Activated naive CD4-positive, alpha-beta T cell treated with anti-CD3 and anti-CD28 coated beads, Interleukin-2, amount 10 ng/mL, durations not matched to agents 7 days and 5 days (primary cell): ENCODE measurements at regions of chrX and their contacts with region 1.

Region 1: DNA sequence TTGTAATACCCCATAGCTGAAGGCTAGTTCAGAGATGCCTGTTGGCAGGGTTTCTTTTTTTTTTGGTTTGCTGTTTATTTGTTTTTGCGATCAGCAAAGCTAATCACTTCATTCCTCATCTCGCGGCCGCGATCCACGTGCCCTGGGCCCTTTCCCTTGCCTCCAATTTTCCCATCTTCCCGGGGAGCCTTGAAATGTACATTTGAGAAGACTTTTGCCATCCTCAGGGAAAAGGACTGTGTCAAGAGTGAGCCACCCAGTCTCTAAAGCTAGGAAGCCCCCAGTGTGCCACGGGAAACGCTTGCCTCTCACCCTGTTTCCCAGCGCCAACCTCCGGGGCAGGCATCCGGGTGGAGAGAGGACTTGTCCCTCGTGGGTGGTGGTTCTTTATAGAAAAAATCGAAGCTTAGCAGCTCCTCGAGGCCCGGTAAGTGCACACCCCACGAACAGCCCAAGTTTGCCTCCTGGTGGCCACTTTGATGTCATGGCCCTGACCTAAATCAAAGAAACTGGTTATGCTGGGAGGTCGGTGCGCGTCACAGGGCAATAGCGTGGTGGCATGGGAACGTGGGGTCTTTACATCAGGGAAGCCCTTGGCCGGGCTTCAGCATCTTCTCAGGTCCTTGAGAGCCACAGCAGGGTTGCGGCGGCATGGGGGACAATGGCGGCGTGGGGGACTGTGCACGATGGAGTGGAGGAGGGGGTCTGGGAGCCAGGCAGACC is 42.0 kb downstream of the MAP7D3 start:
- DNase-seq: peak; percentile 58
- H3K4me3 Mint-ChIP-seq: no peak overlapping the region
- H3K27ac Mint-ChIP-seq: no peak overlapping the region
- H3K4me1 Mint-ChIP-seq: peaks cover 19% of the 10 kb centered on the region
- H3K27me3 Mint-ChIP-seq: no peaks in the 10 kb centered on the region

Region 2: DNA sequence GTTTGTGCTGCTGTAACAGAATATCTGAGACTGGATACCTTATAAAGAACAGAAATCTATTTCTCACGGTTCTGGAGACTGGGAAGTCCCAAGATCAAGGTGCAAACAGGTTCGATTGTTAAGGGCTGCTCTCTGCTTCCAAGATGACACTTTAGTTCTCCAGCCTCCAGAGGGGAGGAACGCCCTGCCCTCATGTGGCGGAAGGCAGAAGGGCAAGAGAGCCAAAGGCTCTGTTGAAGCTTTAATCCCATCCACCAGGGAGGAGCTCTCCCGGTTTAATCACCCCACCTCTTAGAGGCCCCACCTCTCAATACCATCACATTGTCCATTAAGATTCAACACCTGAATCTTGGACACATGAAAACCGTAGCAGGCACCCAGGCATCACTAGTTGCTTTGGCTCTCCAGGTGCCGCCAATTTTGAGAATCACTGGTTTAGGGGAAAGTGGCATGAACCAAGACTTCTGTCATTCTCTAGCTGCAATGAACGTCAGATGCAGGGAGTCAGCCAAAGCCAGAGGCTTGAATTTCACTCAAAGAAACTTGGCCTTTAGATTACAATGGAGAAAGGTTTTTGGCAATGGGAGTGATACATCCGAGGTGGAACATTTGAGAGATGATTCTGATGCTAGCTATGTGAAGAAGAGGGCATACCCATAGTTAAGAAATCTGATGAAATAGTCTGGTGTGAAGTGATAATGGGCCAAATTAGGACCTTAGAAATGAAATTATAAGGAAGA is 46.2 kb before region 1 on chrX:
- CTCF ChIA-PET with region 1: interaction called, 11 read pairs
- DNase-seq: peak; percentile 62
- H3K4me3 Mint-ChIP-seq: no peak overlapping the region
- H3K27ac Mint-ChIP-seq: no peak overlapping the region
- H3K4me1 Mint-ChIP-seq: peaks cover 8% of the 10 kb centered on the region
- H3K27me3 Mint-ChIP-seq: no peaks in the 10 kb centered on the region

Region 3: GRCh38 chrX:136182414-136182813 is 26.8 kb before region 1 on chrX:
- CTCF ChIA-PET with region 1: no interaction called
- DNase-seq: no peak
- H3K4me3 Mint-ChIP-seq: no peak overlapping the region
- H3K27ac Mint-ChIP-seq: no peak overlapping the region
- H3K4me1 Mint-ChIP-seq: no peaks in the 10 kb centered on the region
- H3K27me3 Mint-ChIP-seq: no peaks in the 10 kb centered on the region

Region 4: DNA sequence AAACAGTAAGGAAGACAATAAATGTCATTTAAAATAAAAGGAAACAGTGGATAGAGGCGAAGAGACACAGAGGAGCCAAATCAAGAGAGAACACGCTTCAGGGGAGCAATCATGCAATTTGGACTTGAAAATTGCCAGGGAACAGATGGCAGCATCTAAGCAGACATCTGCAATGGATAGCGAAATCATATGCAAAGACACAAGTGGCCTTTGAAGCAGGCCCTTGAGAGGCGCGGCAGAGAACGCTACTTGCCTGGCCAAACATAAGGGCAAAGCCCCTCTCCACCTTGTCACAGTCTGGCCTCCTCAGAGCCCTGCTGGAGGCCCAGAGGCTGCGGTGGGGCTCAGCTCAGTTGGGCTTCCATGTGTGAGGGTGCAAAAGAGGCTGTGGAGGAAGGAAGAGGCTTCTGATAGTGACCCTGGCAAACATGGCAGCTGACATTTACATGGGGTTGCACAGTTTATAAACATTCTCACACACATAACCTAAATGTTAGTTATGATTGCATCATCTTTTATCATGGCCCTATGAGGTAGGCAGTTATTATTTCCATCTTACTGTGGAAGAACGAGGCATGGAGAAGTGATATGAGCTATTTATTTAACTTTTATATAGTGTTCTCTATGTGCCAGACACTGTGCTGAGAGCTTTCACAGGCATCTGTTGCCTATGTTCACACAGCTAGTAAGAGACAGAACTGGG is 109.9 kb after region 1 on chrX:
- CTCF ChIA-PET with region 1: no interaction called
- DNase-seq: no peak
- H3K4me3 Mint-ChIP-seq: no peak overlapping the region
- H3K27ac Mint-ChIP-seq: no peak overlapping the region
- H3K4me1 Mint-ChIP-seq: no peaks in the 10 kb centered on the region
- H3K27me3 Mint-ChIP-seq: no peaks in the 10 kb centered on the region